T-cell (primary cell): ENCODE measurements at regions of chr19 and their contacts with region 1.

Region 1: DNA sequence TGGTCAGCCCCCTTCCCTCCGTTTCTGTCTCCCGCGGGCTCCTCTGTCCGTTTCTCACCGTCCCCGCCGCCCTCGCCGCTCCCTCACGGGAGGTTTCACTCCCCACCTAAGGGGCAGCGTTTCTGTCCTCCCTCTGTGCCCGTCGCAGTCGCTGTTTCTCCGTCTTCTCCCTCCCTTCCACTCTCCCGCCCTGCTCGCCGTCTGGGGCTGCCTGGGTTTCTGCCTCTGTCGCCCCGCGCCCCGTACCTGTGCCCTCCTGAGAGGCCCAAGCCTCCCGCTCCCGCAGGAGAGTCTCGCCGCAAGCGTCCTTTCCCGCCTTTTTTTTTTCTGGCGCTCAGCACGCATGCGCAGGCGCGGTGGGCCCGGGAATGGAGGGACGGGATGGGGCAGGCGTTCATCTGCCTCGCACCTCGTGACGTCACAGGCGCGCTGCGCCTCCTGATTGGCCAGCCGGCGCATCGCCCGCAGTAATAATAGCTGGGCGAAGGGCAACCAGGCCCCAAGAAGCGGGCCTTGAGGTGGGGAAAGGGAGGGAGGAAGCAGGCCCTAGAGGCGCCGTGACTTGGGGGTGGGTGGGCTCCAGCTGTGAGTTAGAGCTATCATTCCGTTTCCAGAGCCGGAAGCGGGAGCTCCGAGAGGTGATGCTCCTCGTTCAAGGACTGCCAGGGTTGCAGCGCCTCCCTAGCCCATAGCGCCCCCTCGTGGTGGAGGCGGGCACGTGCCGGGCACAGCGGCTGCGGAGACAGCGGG is 15.4 kb downstream of the SSC5D start:
- DNase-seq: peak; percentile 75 to 96 (median 87)
- ATAC-seq: peak; percentile 94 to 97 (median 96)
- H3K4me3 ChIP-seq: peak overlapping the region; percentile 50 to 79
- H3K4me3 Mint-ChIP-seq: peak overlapping the region; percentile 73 to 78 (median 73)
- H3K27ac ChIP-seq: peak overlapping the region; percentile 2
- H3K27ac Mint-ChIP-seq: peak overlapping the region; percentile 31 to 77
- H3K4me1 ChIP-seq: peaks cover 0 to 15% of the 10 kb centered on the region in 2 experiments
- H3K4me1 Mint-ChIP-seq: peaks cover 10 to 22% (median 13%) of the 10 kb centered on the region in 3 donors
- H3K27me3 ChIP-seq: peaks cover 0 to 16% of the 10 kb centered on the region in 2 experiments
- H3K27me3 Mint-ChIP-seq: peaks cover 7 to 8% of the 10 kb centered on the region in 2 donors

Region 2: DNA sequence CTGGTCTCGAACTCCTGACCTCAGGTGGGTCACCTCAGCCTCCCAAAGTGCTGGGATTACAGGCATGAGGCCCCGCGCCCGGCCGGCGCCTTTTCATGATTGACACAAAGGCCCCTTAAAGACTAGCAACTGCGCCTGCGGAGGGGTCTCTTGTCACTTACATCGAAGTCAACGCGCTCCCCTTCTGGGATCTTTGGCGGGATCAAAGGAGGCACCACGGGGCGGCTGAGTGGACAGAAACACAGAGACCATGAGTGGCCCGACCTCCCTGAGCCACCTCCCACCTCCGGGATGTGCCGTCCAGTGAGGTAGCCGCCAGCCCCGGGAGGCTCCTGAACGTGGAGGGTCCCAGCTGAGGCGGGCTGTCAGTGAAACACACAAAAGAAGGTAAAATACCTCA is 362.0 kb before region 1 on chr19:
- CTCF ChIA-PET with region 1: interaction called, 9 to 19 read pairs
- POLR2A ChIA-PET with region 1: no interaction called
- DNase-seq: no peak
- ATAC-seq: peak in 1 of 4 experiments; percentile 10
- H3K4me3 ChIP-seq: no peak overlapping the region
- H3K4me3 Mint-ChIP-seq: no peak overlapping the region
- H3K27ac ChIP-seq: no peak overlapping the region
- H3K27ac Mint-ChIP-seq: no peak overlapping the region
- H3K4me1 ChIP-seq: peaks cover 0 to 18% of the 10 kb centered on the region in 2 experiments
- H3K4me1 Mint-ChIP-seq: peaks cover 4 to 6% (median 6%) of the 10 kb centered on the region in 3 donors
- H3K27me3 ChIP-seq: peaks cover 2 to 97% of the 10 kb centered on the region in 2 experiments
- H3K27me3 Mint-ChIP-seq: peaks cover 37 to 69% of the 10 kb centered on the region in 2 donors

Region 3: GRCh38 chr19:55325172-55325571 is 178.5 kb before region 1 on chr19 and contains the start of gene TMEM150B:
- CTCF ChIA-PET with region 1: no interaction called
- POLR2A ChIA-PET with region 1: no interaction called
- DNase-seq: no peak
- ATAC-seq: no peak
- H3K4me3 ChIP-seq: no peak within 1 kb of the TSS
- H3K4me3 Mint-ChIP-seq: no peak within 1 kb of the TSS
- H3K27ac ChIP-seq: no peak within 1 kb of the TSS
- H3K27ac Mint-ChIP-seq: no peak within 1 kb of the TSS
- H3K4me1 ChIP-seq: no peaks in the 10 kb centered on the region
- H3K4me1 Mint-ChIP-seq: no peaks in the 10 kb centered on the region
- H3K27me3 ChIP-seq: peaks cover 0 to 33% of the 10 kb centered on the region in 2 experiments
- H3K27me3 Mint-ChIP-seq: peaks cover 5 to 23% of the 10 kb centered on the region in 2 donors
- total RNA-seq, gene TMEM150B: 0.47 TPM in 1 of 5 donors, not detected in the others

Region 4: DNA sequence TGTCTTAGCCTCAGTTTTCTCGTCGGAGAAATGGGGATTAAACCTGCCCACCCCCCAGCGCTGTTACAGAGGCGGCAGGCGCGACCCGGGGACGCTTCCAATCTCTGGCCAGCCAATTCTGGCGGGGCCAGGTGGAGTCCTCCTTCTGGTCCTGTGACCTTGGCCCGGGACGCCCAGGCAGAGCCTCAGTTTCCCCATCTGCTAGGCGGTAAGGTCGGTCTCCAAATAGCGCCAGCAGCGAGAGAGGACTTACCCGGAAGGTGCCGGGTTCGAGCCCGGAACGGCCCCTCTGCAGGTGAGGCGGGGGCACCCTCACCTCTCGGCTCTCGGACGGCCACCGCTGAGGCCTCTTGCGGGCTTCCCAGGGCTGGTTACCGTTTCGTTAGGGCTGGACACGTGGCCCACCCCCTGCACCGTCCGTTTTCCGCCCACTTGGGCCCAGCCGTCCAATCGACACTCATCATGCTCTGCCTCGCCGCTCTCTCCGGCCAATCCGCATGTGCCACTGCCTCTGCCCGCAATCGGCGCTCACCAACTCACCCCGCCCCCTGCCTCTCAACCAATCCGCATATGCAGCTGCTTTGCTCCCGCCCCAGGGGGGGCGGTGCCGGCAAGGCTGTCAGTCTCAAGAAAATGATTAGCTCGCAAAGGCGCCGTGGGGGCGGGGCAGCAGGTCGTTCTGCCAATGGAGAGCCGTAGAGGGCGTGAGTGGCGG is 42.3 kb before region 1 on chr19 and contains the start of gene ISOC2:
- CTCF ChIA-PET with region 1: interaction called in 1 of 2 experiments, 12 read pairs
- POLR2A ChIA-PET with region 1: interaction called in 1 of 2 experiments, 3 read pairs
- DNase-seq: peak; percentile 99 to 100 (median 100)
- ATAC-seq: peak; percentile 96 to 98 (median 97)
- H3K4me3 ChIP-seq: peak within 1 kb of the TSS; percentile 84 to 94
- H3K4me3 Mint-ChIP-seq: peak within 1 kb of the TSS; percentile 85 to 88 (median 87)
- H3K27ac ChIP-seq: peak within 1 kb of the TSS; percentile 70
- H3K27ac Mint-ChIP-seq: peak within 1 kb of the TSS; percentile 77 to 93
- H3K4me1 ChIP-seq: peaks cover 0 to 19% of the 10 kb centered on the region in 2 experiments
- H3K4me1 Mint-ChIP-seq: peaks cover 20 to 30% (median 25%) of the 10 kb centered on the region in 3 donors
- H3K27me3 ChIP-seq: peaks cover 0 to 4% of the 10 kb centered on the region in 2 experiments
- H3K27me3 Mint-ChIP-seq: no peaks in the 10 kb centered on the region
- total RNA-seq, gene ISOC2: 6.8 to 18.9 (median 14.7) TPM

Region 5: GRCh38 chr19:55476100-55476775 is 27.4 kb before region 1 on chr19 and contains the start of gene ZNF628:
- CTCF ChIA-PET with region 1: interaction called in 1 of 2 experiments, 21 read pairs
- POLR2A ChIA-PET with region 1: no interaction called
- DNase-seq: peak; percentile 96 to 99 (median 98)
- ATAC-seq: peak; percentile 95
- H3K4me3 ChIP-seq: peak within 1 kb of the TSS; percentile 53 to 90
- H3K4me3 Mint-ChIP-seq: peak within 1 kb of the TSS; percentile 82 to 86 (median 86)
- H3K27ac ChIP-seq: peak within 1 kb of the TSS; percentile 66
- H3K27ac Mint-ChIP-seq: peak within 1 kb of the TSS; percentile 91 to 94
- H3K4me1 ChIP-seq: peaks cover 2 to 24% of the 10 kb centered on the region in 2 experiments
- H3K4me1 Mint-ChIP-seq: peaks cover 26 to 34% (median 28%) of the 10 kb centered on the region in 3 donors
- H3K27me3 ChIP-seq: peaks cover 0 to 10% of the 10 kb centered on the region in 2 experiments
- H3K27me3 Mint-ChIP-seq: no peaks in the 10 kb centered on the region
- total RNA-seq, gene ZNF628: 14.2 to 24.1 (median 16.2) TPM

Region 6: DNA sequence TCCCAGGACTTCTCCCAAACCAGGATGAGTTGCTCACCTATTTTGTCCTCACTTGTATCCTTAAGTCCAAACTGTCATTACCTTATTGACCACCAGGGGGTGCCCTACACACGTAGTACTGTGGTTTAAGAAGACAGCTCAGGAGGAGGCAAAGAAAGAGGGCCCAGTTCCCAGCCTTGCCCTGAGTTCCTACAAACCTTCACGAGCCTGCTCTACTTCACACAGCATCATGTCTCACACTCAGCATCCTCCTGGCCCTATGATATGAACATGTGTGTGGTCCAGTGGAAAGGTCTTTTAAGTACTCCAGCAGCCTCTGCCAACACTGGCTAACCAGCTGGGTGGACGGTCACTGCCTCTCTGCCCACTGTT is 128.8 kb after region 1 on chr19:
- CTCF ChIA-PET with region 1: interaction called in 1 of 2 experiments, 12 read pairs
- POLR2A ChIA-PET with region 1: no interaction called
- DNase-seq: peak; percentile 61 to 97 (median 83)
- ATAC-seq: peak; percentile 42 to 55 (median 47)
- H3K4me3 ChIP-seq: no peak overlapping the region
- H3K4me3 Mint-ChIP-seq: peak overlapping the region in 1 of 3 donors; percentile 2
- H3K27ac ChIP-seq: no peak overlapping the region
- H3K27ac Mint-ChIP-seq: peak overlapping the region; percentile 57 to 66
- H3K4me1 ChIP-seq: peaks cover 17 to 44% of the 10 kb centered on the region in 2 experiments
- H3K4me1 Mint-ChIP-seq: peaks cover 44 to 49% (median 45%) of the 10 kb centered on the region in 3 donors
- H3K27me3 ChIP-seq: peaks cover 0 to 3% of the 10 kb centered on the region in 2 experiments
- H3K27me3 Mint-ChIP-seq: no peaks in the 10 kb centered on the region